ENCODE measurements at regions of chr21 and their contacts with region 1.

Region 1: DNA sequence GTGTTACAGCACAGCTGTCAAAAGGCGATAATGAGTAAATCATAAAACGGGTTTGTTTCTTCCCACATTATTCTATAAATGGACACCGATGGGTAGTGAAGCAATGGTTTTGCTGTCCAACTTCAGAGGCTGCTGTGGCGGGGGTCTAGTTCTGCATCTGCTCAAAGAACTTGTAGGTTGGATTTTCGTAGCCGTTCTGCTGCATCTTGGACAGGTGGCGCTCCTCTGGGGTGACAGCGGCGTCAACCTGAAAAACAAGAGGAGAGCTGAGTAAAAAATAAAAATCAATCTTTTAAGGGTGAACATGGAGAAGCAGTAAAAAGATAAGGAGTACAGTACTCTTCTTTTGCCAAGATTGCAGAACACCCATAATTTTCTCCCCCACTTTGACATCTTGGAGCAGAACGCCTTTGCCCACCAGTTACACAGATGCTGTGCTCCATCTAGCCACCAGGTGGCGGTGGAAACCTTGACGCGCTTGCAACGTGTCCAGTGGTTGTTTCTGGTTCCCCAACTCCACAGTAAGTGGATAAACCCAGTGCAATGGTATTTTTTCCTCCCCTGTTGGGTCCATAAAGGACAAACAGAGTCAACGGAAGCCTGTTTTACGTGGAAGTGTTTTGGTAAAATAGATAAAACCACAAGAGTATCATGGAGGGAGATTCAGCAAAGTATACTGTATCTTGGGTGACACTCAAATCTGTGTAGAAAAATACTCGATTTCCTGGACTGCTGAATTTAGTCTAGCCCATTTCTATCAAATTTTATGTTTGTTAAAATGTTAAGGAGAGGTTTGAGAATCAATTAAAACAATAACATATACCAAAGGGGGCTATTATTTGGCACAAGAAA is 147.0 kb downstream of the GABPA start:
- DNase-seq: peak; percentile 73
- ATAC-seq: peak; percentile 80
- H3K4me3 Mint-ChIP-seq: no peak overlapping the region
- H3K27ac Mint-ChIP-seq: no peak overlapping the region
- H3K4me1 Mint-ChIP-seq: no peaks in the 10 kb centered on the region
- H3K27me3 Mint-ChIP-seq: no peaks in the 10 kb centered on the region

Region 2: DNA sequence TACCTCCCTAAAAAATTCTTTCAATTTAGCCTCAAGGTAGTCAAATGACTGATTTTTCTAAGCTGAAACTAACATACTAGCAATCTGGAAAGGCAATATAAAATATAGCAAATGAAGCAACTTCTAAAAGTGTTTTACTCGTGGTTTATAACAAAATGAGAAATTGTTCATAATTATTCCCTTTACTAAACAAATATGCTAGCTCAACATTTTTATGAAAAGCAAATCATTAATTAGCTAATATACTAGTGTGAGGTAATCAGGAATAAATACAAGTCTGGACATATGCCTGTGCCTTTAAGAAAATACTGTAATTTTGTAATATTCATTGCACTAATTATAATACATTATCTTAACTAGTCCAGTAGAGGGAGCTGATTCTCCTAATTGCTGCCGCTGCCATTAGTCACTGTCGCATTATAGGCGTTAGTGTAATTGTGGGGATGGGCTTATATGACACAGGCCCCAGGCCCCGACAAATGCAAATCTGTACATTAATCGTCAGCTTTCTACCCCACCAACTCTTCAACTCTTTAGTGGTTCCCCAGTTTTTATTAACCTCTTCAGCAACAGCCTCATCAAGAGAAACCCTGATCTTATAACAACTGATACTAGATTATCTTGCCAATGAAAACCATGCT is 13.9 kb after region 1 on chr21:
- CTCF ChIA-PET with region 1: interaction called, 22 read pairs
- POLR2A ChIA-PET with region 1: no interaction called
- DNase-seq: peak; percentile 22
- ATAC-seq: no peak
- H3K4me3 Mint-ChIP-seq: no peak overlapping the region
- H3K27ac Mint-ChIP-seq: no peak overlapping the region
- H3K4me1 Mint-ChIP-seq: peaks cover 16% of the 10 kb centered on the region
- H3K27me3 Mint-ChIP-seq: no peaks in the 10 kb centered on the region

Region 3: DNA sequence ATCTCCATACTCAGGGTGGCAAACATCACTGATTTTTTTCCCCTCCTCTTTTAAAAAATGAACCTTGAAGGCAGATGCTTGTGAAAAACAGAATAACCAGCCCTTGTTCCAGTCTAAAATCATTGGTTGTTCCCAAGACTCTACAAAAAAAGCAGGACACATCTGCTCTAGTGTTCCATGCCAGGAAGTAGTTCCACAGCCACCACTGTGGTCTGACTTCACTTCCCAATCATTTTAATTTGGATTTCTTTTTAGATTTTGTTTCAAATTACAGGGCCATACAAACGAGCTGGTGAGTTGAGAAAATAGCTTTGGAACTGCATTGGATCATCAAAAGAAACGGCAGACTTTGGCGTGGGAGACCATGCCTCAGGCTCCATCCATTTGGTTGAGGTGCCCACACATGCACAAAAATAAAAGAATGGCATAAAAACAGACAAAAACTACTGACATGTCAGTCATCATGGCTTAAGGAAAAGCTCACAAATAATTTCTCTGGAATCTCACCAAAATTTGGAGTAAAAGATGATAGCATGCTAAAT is 63.0 kb after region 1 on chr21:
- CTCF ChIA-PET with region 1: no interaction called
- POLR2A ChIA-PET with region 1: no interaction called
- DNase-seq: no peak
- ATAC-seq: no peak
- H3K4me3 Mint-ChIP-seq: no peak overlapping the region
- H3K27ac Mint-ChIP-seq: no peak overlapping the region
- H3K4me1 Mint-ChIP-seq: no peaks in the 10 kb centered on the region
- H3K27me3 Mint-ChIP-seq: no peaks in the 10 kb centered on the region

Region 4: GRCh38 chr21:25979845-25980616 is 98.3 kb after region 1 on chr21:
- CTCF ChIA-PET with region 1: no interaction called
- POLR2A ChIA-PET with region 1: no interaction called
- DNase-seq: no peak
- ATAC-seq: no peak
- H3K4me3 Mint-ChIP-seq: no peak overlapping the region
- H3K27ac Mint-ChIP-seq: no peak overlapping the region
- H3K4me1 Mint-ChIP-seq: no peaks in the 10 kb centered on the region
- H3K27me3 Mint-ChIP-seq: no peaks in the 10 kb centered on the region